ENCODE measurements at regions of chr6 and their contacts with region 1.

Region 1: GRCh38 chr6:37566111-37566949 is 66.6 kb upstream of the CCDC167 start:
- DNase-seq: peak; percentile 64 to 74 (median 69)
- H3K4me3 ChIP-seq: peak overlapping the region in 1 of 2 donors; percentile 43
- H3K4me3 Mint-ChIP-seq: peak overlapping the region; percentile 46 to 77 (median 66)
- H3K27ac ChIP-seq: no peak overlapping the region
- H3K27ac Mint-ChIP-seq: peak overlapping the region in 6 of 7 donors; percentile 31 to 87 (median 70)
- H3K4me1 ChIP-seq: no peaks in the 10 kb centered on the region
- H3K4me1 Mint-ChIP-seq: peaks cover 0 to 10% (median 5%) of the 10 kb centered on the region in 4 donors
- H3K27me3 ChIP-seq: no peaks in the 10 kb centered on the region
- H3K27me3 Mint-ChIP-seq: no peaks in the 10 kb centered on the region

Region 2: DNA sequence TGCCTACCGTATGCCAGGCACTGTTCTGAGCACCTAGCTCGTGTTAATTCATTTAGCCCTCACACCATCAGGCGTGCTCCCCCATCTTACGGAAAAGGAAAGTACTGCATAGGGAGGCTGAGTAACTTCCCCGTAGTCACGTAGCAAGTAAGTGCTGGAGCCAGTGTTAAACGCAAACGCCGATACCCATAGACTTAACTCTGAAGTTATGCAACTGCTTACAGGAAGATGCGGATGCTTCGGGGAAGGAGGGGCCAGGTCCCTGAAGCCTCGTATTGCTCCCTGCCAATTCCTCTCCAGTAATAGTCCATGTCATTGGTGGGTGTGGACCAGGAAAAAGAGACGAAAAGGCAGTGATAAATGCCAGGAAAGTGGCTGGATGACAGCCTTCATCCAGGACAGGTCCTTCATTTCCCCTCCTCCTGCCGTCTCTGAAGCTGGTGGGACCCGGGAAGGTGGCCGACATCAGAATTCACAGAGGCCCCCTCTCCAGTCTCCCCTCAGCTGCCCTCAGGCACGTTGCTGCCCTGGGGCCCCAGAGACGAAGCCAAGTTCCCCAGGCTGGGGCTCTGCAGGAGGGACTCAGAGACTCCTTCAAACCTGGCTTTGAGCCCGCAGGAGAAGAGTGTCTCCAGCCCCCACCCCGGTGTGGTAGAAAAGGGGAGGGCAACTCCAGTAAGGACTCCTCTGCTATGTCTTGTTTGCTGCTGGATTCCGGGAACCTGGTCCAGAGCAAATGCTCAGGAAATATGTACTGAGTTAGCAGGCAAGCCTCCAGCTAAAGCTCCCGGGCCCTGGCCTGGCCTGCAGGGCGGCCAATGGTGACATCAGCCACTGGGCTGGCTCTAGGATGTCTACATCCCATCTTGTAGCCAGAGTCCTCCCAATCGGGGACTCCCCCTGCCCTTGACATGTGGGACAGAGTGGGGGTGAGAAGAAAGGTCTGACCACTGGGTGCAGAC is 830.9 kb before region 1 on chr6:
- CTCF ChIA-PET with region 1: no interaction called
- POLR2A ChIA-PET with region 1: no interaction called
- intact Hi-C with region 1: no loop called
- DNase-seq: peak in 2 of 5 donors; percentile 15 to 21
- H3K4me3 ChIP-seq: no peak overlapping the region
- H3K4me3 Mint-ChIP-seq: peak overlapping the region; percentile 31 to 70 (median 52)
- H3K27ac ChIP-seq: no peak overlapping the region
- H3K27ac Mint-ChIP-seq: peak overlapping the region in 5 of 7 donors; percentile 38 to 84 (median 59)
- H3K4me1 ChIP-seq: peaks cover 11% of the 10 kb centered on the region
- H3K4me1 Mint-ChIP-seq: peaks cover 5 to 8% (median 5%) of the 10 kb centered on the region in 4 donors
- H3K27me3 ChIP-seq: no peaks in the 10 kb centered on the region
- H3K27me3 Mint-ChIP-seq: no peaks in the 10 kb centered on the region

Region 3: DNA sequence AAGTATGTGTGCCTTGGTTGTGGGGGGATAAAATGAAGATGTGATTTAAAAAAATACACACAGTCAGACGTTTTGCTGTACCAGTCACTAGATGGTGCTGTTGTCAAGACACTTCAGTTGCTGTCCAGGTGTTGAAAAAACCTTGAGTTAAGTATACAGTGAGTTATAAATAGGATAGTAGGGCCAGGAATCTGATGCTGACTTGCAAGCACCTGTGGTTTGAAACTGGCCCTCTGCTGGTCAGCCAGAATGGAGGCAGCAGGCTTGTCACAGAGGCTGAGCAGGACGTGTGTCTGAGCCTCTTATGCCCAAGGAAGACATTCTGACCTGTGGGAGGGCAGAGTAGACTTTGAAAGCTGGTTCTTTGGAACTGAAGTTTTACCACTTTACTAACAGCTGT is 184.8 kb before region 1 on chr6:
- CTCF ChIA-PET with region 1: interaction called, 10 read pairs
- POLR2A ChIA-PET with region 1: no interaction called
- intact Hi-C with region 1: loop called (anchors 1 kb)
- DNase-seq: peak; percentile 41 to 55 (median 45)
- H3K4me3 ChIP-seq: no peak overlapping the region
- H3K4me3 Mint-ChIP-seq: no peak overlapping the region
- H3K27ac ChIP-seq: no peak overlapping the region
- H3K27ac Mint-ChIP-seq: peak overlapping the region in 2 of 7 donors; percentile 25 to 33
- H3K4me1 ChIP-seq: no peaks in the 10 kb centered on the region
- H3K4me1 Mint-ChIP-seq: peaks cover 0 to 2% (median 0%) of the 10 kb centered on the region in 4 donors
- H3K27me3 ChIP-seq: no peaks in the 10 kb centered on the region
- H3K27me3 Mint-ChIP-seq: no peaks in the 10 kb centered on the region

Region 4: GRCh38 chr6:37489660-37490361 is 76.5 kb before region 1 on chr6:
- CTCF ChIA-PET with region 1: interaction called, 131 read pairs
- POLR2A ChIA-PET with region 1: interaction called, 7 read pairs
- intact Hi-C with region 1: no loop called
- DNase-seq: peak in 3 of 5 donors; percentile 34 to 60 (median 35)
- H3K4me3 ChIP-seq: no peak overlapping the region
- H3K4me3 Mint-ChIP-seq: peak overlapping the region in 7 of 8 donors; percentile 33 to 81 (median 71)
- H3K27ac ChIP-seq: peak overlapping the region; percentile 52
- H3K27ac Mint-ChIP-seq: peak overlapping the region; percentile 92 to 99 (median 97)
- H3K4me1 ChIP-seq: peaks cover 76% of the 10 kb centered on the region
- H3K4me1 Mint-ChIP-seq: peaks cover 40 to 86% (median 72%) of the 10 kb centered on the region in 4 donors
- H3K27me3 ChIP-seq: no peaks in the 10 kb centered on the region
- H3K27me3 Mint-ChIP-seq: no peaks in the 10 kb centered on the region

Region 5: DNA sequence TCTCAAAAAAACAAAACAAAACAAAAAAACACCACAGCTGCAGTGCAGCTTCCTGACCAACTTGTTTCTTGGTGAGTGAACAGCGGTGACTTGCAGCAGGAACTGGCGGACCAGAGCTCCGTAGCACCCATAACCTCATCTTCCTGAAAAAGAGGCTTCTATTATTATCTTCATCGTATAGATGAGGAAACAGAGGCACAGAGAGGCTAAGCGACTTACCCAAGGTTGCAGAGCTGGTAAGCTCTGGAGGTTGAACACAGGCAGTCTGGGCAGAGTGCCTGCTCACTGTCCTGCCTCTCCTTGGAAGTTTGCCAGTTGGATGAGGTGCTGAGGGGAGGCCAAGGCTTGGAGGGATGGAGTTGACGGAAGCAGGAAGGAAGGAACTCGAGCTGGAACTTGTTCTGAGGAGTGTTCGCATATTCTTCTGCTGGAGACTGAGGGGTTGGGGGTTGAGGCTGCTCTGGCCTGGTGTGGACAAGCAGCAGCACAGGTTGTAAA is 18.7 kb before region 1 on chr6:
- CTCF ChIA-PET with region 1: interaction called, 6 read pairs
- POLR2A ChIA-PET with region 1: interaction called, 13 read pairs
- intact Hi-C with region 1: no loop called
- DNase-seq: peak in 3 of 5 donors; percentile 25 to 43 (median 39)
- H3K4me3 ChIP-seq: no peak overlapping the region
- H3K4me3 Mint-ChIP-seq: peak overlapping the region; percentile 8 to 75 (median 68)
- H3K27ac ChIP-seq: peak overlapping the region; percentile 13
- H3K27ac Mint-ChIP-seq: peak overlapping the region; percentile 80 to 97 (median 94)
- H3K4me1 ChIP-seq: peaks cover 28% of the 10 kb centered on the region
- H3K4me1 Mint-ChIP-seq: peaks cover 11 to 53% (median 40%) of the 10 kb centered on the region in 4 donors
- H3K27me3 ChIP-seq: no peaks in the 10 kb centered on the region
- H3K27me3 Mint-ChIP-seq: no peaks in the 10 kb centered on the region

Region 6: GRCh38 chr6:37713529-37714119 is 147.3 kb after region 1 on chr6:
- CTCF ChIA-PET with region 1: no interaction called
- POLR2A ChIA-PET with region 1: no interaction called
- intact Hi-C with region 1: no loop called
- DNase-seq: no peak
- H3K4me3 ChIP-seq: no peak overlapping the region
- H3K4me3 Mint-ChIP-seq: no peak overlapping the region
- H3K27ac ChIP-seq: no peak overlapping the region
- H3K27ac Mint-ChIP-seq: no peak overlapping the region
- H3K4me1 ChIP-seq: no peaks in the 10 kb centered on the region
- H3K4me1 Mint-ChIP-seq: no peaks in the 10 kb centered on the region
- H3K27me3 ChIP-seq: no peaks in the 10 kb centered on the region
- H3K27me3 Mint-ChIP-seq: no peaks in the 10 kb centered on the region